ENCODE measurements at regions of chr1 and their contacts with region 1.

Region 1: DNA sequence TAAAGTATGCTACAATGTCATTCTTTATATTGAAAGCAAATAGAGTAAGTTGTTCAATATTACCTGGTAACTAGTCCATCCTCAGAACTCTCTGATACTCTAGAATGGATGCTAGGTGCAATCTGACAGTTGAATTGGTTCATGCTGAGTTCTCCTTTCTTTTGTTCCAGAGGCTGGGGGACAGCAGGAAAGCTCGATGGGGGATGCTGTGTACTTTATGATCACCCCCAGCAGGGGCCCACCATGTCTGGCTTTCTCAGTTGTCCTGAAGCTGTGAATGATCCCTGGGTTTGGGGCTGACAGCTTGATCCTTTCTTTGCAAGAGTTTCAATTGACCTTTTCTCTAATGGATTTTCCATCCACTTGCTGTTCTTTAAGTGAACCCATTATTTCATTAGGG is 22.5 kb downstream of the FMN2 start:
- DNase-seq: no peak
- H3K4me3 ChIP-seq: no peak overlapping the region
- H3K27me3 ChIP-seq: no peaks in the 10 kb centered on the region
- CTCF ChIP-seq: no peak

Region 2: DNA sequence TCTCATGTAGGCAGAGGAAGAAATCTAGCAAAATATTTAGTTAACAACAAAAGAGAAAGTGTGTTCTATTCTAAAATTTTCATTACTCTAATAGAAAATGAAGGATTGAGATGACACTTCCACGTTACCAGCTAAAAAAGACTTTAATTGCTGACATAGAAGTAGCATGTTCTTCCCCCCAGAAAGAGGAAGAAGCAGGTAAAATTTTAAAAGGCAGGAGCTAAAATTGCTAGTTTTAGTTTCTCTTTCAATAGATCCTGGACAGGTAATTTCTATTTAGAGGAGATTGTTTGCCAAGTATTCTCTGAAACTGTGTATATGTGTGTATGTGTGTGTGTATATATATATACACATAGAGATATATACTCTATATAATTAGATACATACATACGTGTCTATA is 270.7 kb before region 1 on chr1:
- CTCF ChIA-PET with region 1: no interaction called
- POLR2A ChIA-PET with region 1: no interaction called
- DNase-seq: no peak
- H3K4me3 ChIP-seq: no peak overlapping the region
- H3K27me3 ChIP-seq: no peaks in the 10 kb centered on the region
- CTCF ChIP-seq: no peak

Region 3: GRCh38 chr1:240126821-240127220 is 12.6 kb after region 1 on chr1:
- CTCF ChIA-PET with region 1: interaction called, 17 read pairs
- POLR2A ChIA-PET with region 1: no interaction called
- DNase-seq: no peak
- H3K4me3 ChIP-seq: no peak overlapping the region
- H3K27me3 ChIP-seq: no peaks in the 10 kb centered on the region
- CTCF ChIP-seq: no peak

Measured in BJ (cell line).